Activated CD8-positive, alpha-beta T cell treated with anti-CD3 and anti-CD28 coated beads for 36 hours (primary cell): ENCODE measurements at regions of chr2 and their contacts with region 1.

Region 1: GRCh38 chr2:233443468-233444183 is 89.3 kb downstream of the DGKD start:
- DNase-seq: peak; percentile 92
- ATAC-seq: peak; percentile 87
- H3K4me3 Mint-ChIP-seq: no peak overlapping the region
- H3K27ac Mint-ChIP-seq: peak overlapping the region; percentile 13
- H3K4me1 Mint-ChIP-seq: peaks cover 21% of the 10 kb centered on the region
- H3K27me3 Mint-ChIP-seq: no peaks in the 10 kb centered on the region
- CTCF ChIP-seq: peak; percentile 78

Region 2: DNA sequence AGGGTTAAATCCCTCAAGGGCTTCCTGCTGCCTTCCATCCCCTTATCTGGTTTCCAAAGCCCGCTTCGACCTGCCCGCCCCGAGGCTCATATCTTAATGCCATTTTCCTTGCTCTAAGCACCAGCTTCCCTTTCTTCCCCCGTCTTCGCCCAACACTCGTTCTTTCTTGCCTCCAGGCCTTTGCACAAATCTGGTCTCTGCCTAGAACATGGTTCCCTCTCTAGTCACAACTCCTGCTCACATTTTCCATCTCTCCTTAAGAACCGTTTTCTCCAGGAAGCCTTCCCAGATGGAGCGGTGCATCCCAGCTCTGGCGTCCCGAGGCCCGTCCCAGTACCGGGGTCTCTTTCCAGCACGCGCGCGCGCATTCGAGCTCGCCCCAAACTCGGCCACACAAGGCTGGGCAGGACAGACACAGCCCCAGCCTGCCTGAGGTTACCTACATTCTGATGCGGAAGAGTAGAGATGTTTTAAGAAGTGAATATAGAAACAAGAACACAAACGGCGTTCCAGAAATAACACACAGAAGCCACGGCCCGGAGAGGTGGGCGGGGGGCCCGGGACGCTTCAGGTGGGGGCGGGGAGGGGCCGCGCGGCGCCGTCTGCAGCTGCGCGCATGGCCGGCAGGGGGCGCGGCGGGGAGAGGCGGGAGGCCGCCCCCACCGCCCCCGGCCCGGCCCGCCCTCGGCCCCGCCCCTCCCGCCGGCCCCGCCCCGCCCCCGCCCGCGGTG is 89.7 kb before region 1 on chr2 and contains the start of gene DGKD:
- CTCF ChIA-PET with region 1: interaction called, 6 read pairs
- POLR2A ChIA-PET with region 1: no interaction called
- intact Hi-C with region 1: loop called (anchors 10 kb)
- DNase-seq: peak; percentile 77
- ATAC-seq: peak; percentile 77
- H3K4me3 Mint-ChIP-seq: peak within 1 kb of the TSS; percentile 83
- H3K27ac Mint-ChIP-seq: peak within 1 kb of the TSS; percentile 92
- H3K4me1 Mint-ChIP-seq: peaks cover 64% of the 10 kb centered on the region
- H3K27me3 Mint-ChIP-seq: no peaks in the 10 kb centered on the region
- CTCF ChIP-seq: no peak
- total RNA-seq, gene DGKD: 89.6 to 99.5 TPM

Region 3: GRCh38 chr2:233404222-233404621 is 39.4 kb before region 1 on chr2:
- CTCF ChIA-PET with region 1: interaction called, 213 read pairs
- POLR2A ChIA-PET with region 1: interaction called, 3 read pairs
- intact Hi-C with region 1: loop called (anchors 2 kb)
- DNase-seq: peak; percentile 77
- ATAC-seq: peak; percentile 38
- H3K4me3 Mint-ChIP-seq: no peak overlapping the region
- H3K27ac Mint-ChIP-seq: peak overlapping the region; percentile 49
- H3K4me1 Mint-ChIP-seq: peaks cover 60% of the 10 kb centered on the region
- H3K27me3 Mint-ChIP-seq: no peaks in the 10 kb centered on the region
- CTCF ChIP-seq: peak; percentile 81

Region 4: GRCh38 chr2:233418761-233419625 is 24.6 kb before region 1 on chr2:
- CTCF ChIA-PET with region 1: interaction called, 27 read pairs
- POLR2A ChIA-PET with region 1: interaction called, 4 read pairs
- intact Hi-C with region 1: no loop called
- DNase-seq: peak; percentile 85
- ATAC-seq: peak; percentile 68
- H3K4me3 Mint-ChIP-seq: peak overlapping the region; percentile 71
- H3K27ac Mint-ChIP-seq: peak overlapping the region; percentile 88
- H3K4me1 Mint-ChIP-seq: peaks cover 93% of the 10 kb centered on the region
- H3K27me3 Mint-ChIP-seq: no peaks in the 10 kb centered on the region
- CTCF ChIP-seq: no peak